Naive thymus-derived CD8-positive, alpha-beta T cell (primary cell): ENCODE measurements at regions of chr11 and their contacts with region 1.

Region 1: GRCh38 chr11:59615637-59616395 is at the start of gene OSBP:
- DNase-seq: peak; percentile 88 to 99 (median 99)
- ATAC-seq: peak; percentile 79 to 81
- H3K4me3 Mint-ChIP-seq: peak within 1 kb of the TSS; percentile 90 to 97 (median 94)
- H3K27ac Mint-ChIP-seq: peak within 1 kb of the TSS; percentile 86 to 99 (median 98)
- H3K4me1 Mint-ChIP-seq: peaks cover 24 to 51% (median 48%) of the 10 kb centered on the region in 4 donors
- H3K27me3 Mint-ChIP-seq: no peaks in the 10 kb centered on the region
- polyA plus RNA-seq, gene OSBP: 19.5 to 34.8 (median 19.6) TPM

Region 2: GRCh38 chr11:59550368-59550841 is 65.4 kb before region 1 on chr11:
- POLR2A ChIA-PET with region 1: interaction called, 21 read pairs
- DNase-seq: peak; percentile 74 to 94 (median 90)
- ATAC-seq: peak; percentile 86 to 91
- H3K4me3 Mint-ChIP-seq: peak overlapping the region; percentile 85 to 97 (median 90)
- H3K27ac Mint-ChIP-seq: peak overlapping the region; percentile 77 to 100 (median 92)
- H3K4me1 Mint-ChIP-seq: peaks cover 13 to 37% (median 33%) of the 10 kb centered on the region in 4 donors
- H3K27me3 Mint-ChIP-seq: peaks cover 0 to 9% (median 0%) of the 10 kb centered on the region in 5 donors

Region 3: GRCh38 chr11:59560702-59561469 is 54.9 kb before region 1 on chr11:
- POLR2A ChIA-PET with region 1: interaction called, 37 read pairs
- DNase-seq: peak; percentile 67 to 90 (median 79)
- ATAC-seq: peak; percentile 70 to 75
- H3K4me3 Mint-ChIP-seq: peak overlapping the region; percentile 82 to 99 (median 92)
- H3K27ac Mint-ChIP-seq: peak overlapping the region; percentile 87 to 100 (median 95)
- H3K4me1 Mint-ChIP-seq: peaks cover 21 to 61% (median 51%) of the 10 kb centered on the region in 4 donors
- H3K27me3 Mint-ChIP-seq: peaks cover 0 to 3% (median 0%) of the 10 kb centered on the region in 5 donors

Region 4: DNA sequence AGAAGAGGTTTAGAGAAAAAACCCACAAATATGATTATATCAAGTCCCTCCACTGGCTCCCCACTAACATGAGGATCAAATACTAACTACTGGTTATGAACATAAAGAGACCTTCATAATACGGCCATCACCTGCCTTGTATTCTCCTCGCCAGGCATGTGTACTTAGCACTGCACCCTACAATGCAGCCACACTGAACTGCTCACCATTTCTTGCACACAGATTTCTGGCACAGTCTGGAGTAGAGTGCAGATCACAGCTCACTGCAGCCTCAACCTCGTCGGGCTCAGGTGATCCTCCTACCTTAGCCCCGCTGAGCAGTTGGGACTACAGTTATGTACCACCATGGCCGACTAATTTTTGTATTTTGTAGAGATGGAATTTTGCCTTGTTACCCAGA is 13.4 kb before region 1 on chr11:
- POLR2A ChIA-PET with region 1: interaction called, 12 read pairs
- DNase-seq: no peak
- ATAC-seq: no peak
- H3K4me3 Mint-ChIP-seq: no peak overlapping the region
- H3K27ac Mint-ChIP-seq: peak overlapping the region in 2 of 10 donors; percentile 19 to 32
- H3K4me1 Mint-ChIP-seq: peaks cover 8 to 41% (median 20%) of the 10 kb centered on the region in 4 donors
- H3K27me3 Mint-ChIP-seq: no peaks in the 10 kb centered on the region

Region 5: DNA sequence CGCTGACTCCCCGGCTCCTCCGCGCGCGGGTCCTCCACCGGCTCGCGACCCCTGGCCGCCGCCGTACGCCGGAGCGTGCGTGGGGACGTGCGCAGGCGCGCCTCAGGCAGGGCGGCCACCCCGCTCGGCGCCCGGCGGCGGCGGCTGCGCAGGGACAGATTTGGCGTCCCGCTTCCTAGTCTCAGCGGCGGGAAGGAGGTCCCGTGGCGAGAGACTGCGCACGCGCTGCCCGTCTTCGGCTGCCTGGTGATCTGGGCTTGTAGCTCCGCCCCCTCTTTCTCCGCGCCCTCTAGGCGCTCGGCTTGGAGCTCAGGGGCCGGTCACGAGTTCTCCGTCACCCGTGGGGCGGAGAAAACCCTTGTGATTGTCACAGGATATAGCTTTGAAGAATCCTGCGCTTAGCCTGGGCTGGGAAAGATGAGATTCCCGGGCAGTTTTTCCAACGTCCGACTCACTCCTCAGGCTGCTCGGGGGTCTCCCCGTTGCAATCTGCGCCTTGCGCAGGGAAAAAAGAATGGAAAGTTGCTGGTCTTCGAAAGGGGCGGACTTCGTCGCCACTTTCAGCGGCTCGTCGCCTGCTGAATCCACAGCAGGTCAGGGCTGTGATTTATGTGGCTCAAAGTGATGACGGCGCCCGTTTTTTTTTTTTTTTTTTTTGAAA is 53.3 kb after region 1 on chr11 and contains the start of gene PATL1:
- POLR2A ChIA-PET with region 1: interaction called, 96 read pairs
- DNase-seq: peak; percentile 98 to 100 (median 99)
- ATAC-seq: peak; percentile 91
- H3K4me3 Mint-ChIP-seq: peak within 1 kb of the TSS; percentile 96 to 99 (median 97)
- H3K27ac Mint-ChIP-seq: peak within 1 kb of the TSS; percentile 96 to 100 (median 100)
- H3K4me1 Mint-ChIP-seq: peaks cover 18 to 44% (median 42%) of the 10 kb centered on the region in 4 donors
- H3K27me3 Mint-ChIP-seq: no peaks in the 10 kb centered on the region
- polyA plus RNA-seq, gene PATL1: 3.2 to 8.2 (median 3.8) TPM